ENCODE measurements at regions of chrX and their contacts with region 1.

Region 1: DNA sequence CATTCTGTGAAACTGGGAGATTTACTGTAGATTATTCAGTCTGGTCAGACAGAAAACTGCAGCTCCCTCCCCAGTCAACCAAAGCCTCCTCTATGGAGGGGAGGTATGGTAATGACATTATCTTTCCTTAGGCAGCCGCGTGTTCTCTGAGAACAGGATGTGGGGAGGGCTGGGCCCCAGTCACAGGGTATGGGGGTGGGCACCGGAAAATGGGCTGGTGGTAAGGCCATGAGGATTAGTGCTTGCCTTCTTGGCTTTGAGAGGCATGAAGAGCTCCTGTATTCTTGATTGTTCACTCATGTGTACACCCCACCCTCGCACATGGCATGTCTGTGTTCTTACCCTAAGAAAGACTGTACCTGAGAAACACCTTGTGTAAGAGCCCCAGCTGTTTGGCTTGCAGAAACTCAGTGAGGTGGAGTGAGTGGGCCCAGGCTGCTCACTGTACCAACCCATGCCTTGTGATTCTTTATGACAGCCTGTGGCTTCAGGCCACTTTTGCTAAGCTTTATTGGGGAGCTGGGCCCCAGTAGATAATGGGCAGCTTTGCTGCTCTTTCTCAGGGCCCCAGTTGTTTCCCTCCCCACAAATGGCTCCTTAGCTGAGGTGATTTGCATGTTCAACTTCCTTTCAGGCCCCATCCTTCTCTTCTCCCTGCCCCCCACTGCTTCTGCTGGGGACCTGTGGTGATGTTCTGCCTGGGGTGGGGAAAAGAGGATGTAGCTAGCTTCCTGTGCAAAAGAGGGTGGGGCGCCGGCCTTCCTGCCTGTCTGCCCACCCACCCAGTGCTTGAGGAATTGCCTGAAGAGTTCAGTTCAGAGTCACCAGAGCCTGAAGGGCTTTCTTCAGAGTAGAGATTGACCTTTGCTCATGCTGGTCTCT is 30.7 kb downstream of the MSN start:
- DNase-seq: peak; percentile 39 to 86 (median 74)
- ATAC-seq: peak; percentile 80 to 88
- H3K4me3 Mint-ChIP-seq: peak overlapping the region; percentile 70 to 89 (median 82)
- H3K27ac Mint-ChIP-seq: peak overlapping the region; percentile 79 to 99 (median 96)
- H3K4me1 Mint-ChIP-seq: peaks cover 30 to 96% (median 83%) of the 10 kb centered on the region in 4 donors
- H3K27me3 Mint-ChIP-seq: no peaks in the 10 kb centered on the region

Region 2: GRCh38 chrX:65595460-65595876 is 102.7 kb before region 1 on chrX:
- POLR2A ChIA-PET with region 1: interaction called, 30 read pairs
- DNase-seq: peak; percentile 74 to 95 (median 88)
- ATAC-seq: peak; percentile 70 to 83
- H3K4me3 Mint-ChIP-seq: peak overlapping the region; percentile 38 to 82 (median 75)
- H3K27ac Mint-ChIP-seq: peak overlapping the region; percentile 71 to 99 (median 94)
- H3K4me1 Mint-ChIP-seq: peaks cover 24 to 53% (median 41%) of the 10 kb centered on the region in 4 donors
- H3K27me3 Mint-ChIP-seq: no peaks in the 10 kb centered on the region

Region 3: DNA sequence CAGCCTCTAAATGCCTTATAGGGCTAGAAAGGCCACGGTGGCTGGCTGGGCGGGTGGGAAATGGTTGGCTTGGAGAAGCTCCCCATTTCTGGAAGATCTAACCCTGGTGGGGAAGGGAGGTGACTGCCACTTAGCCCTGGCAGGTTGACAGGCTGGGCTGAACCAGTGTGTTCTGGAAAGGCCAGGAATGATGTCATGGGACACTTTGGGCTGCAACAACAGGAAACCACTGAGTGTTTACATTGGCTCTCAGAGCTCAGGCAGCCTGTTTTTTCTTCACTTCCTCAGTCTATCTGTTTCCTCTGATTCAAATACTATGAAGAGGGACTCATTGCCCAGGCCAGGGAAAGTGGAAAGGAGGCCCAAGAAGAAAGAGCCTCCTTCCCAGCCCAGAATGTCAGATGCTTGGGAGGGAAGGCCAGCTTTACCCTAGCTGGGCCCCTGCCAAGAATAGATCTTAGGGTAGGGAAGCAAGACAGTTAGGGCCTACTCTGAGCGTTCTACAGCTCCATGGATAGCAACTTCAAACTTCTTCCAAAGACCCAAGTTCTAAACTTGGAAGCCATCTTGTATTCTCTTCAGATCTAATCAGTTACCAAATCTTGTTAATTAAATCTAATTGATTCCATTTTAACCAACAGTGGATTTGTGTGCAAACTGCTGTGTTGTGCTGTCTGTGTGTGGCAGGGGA is 96.5 kb before region 1 on chrX:
- POLR2A ChIA-PET with region 1: interaction called, 30 read pairs
- DNase-seq: peak; percentile 12 to 72 (median 38)
- ATAC-seq: peak; percentile 74 to 83
- H3K4me3 Mint-ChIP-seq: peak overlapping the region; percentile 12 to 76 (median 66)
- H3K27ac Mint-ChIP-seq: peak overlapping the region; percentile 83 to 97 (median 94)
- H3K4me1 Mint-ChIP-seq: peaks cover 32 to 77% (median 74%) of the 10 kb centered on the region in 4 donors
- H3K27me3 Mint-ChIP-seq: no peaks in the 10 kb centered on the region

Region 4: DNA sequence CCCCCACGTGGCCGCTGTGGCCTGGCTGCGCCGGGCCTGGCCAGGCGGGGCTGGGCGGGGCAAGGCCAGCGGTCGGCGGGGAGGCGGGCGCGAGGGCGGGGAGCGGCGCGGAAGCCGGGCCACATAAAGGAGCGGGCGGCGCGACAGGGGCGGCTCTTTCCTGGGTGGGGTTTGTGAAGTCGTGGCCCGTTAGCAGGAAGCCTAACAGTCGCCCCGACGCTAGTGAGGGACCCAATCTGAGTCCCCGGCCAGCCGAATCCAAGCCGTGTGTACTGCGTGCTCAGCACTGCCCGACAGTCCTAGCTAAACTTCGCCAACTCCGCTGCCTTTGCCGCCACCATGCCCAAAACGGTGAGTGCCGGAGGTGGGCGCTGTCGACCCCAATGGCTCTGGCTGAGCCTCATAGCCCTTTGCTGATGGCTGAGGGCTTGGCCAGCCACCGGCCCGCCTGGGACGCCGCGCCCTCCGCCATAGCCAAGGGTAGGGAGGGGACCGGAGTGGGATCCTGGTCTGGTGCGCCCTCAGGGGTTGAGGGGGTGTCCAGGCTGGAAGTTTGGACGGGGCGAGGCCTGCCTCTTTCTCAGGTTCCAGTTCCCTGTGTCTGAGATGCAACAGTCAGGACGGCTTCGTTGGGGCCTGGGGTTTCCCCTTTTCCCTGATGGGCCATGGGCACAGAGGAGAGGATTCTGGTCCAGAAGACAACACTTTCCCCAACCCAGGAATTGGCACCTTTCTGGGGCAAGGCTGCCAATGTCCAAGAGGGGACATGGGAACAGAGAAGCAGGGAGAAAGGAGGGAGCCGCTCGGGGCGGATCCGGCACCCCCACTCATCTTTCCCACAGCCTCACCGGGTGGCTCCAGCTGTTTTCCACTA is 30.4 kb before region 1 on chrX and contains the start of gene MSN:
- POLR2A ChIA-PET with region 1: interaction called, 16 read pairs
- DNase-seq: peak; percentile 51 to 80 (median 64)
- ATAC-seq: peak; percentile 81 to 84
- H3K4me3 Mint-ChIP-seq: peak within 1 kb of the TSS; percentile 94 to 98 (median 95)
- H3K27ac Mint-ChIP-seq: peak within 1 kb of the TSS; percentile 85 to 96 (median 94)
- H3K4me1 Mint-ChIP-seq: peaks cover 19 to 42% (median 36%) of the 10 kb centered on the region in 4 donors
- H3K27me3 Mint-ChIP-seq: no peaks in the 10 kb centered on the region
- polyA plus RNA-seq, gene MSN: 467 to 552 (median 518) TPM

Region 5: GRCh38 chrX:65723706-65724105 is 25.6 kb after region 1 on chrX:
- POLR2A ChIA-PET with region 1: interaction called, 22 read pairs
- DNase-seq: peak in 4 of 10 donors; percentile 4 to 38 (median 14)
- ATAC-seq: peak; percentile 17 to 69
- H3K4me3 Mint-ChIP-seq: peak overlapping the region in 9 of 10 donors; percentile 24 to 79 (median 58)
- H3K27ac Mint-ChIP-seq: peak overlapping the region; percentile 78 to 96 (median 91)
- H3K4me1 Mint-ChIP-seq: peaks cover 39 to 94% (median 86%) of the 10 kb centered on the region in 4 donors
- H3K27me3 Mint-ChIP-seq: no peaks in the 10 kb centered on the region

Region 6: DNA sequence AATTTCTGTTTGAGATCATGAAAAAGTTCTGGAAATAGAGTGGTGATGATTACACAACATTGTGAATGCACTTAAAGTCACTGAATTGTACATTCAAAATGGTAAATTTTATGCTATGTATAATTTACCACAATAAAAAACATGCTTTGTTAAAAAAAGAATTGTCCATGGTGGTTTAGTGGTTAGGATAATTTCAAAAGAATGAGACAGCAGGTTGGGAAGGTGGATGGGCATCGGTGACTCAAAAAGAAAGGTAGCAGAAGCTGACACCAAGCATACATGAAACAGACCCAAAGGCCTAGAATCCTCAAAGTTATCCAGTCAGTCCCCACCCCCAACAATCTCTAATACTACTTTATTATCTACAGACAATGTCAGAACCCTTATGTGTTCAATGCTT is 60.3 kb after region 1 on chrX:
- POLR2A ChIA-PET with region 1: no interaction called
- DNase-seq: no peak
- ATAC-seq: no peak
- H3K4me3 Mint-ChIP-seq: no peak overlapping the region
- H3K27ac Mint-ChIP-seq: no peak overlapping the region
- H3K4me1 Mint-ChIP-seq: peaks cover 10 to 39% (median 26%) of the 10 kb centered on the region in 4 donors
- H3K27me3 Mint-ChIP-seq: no peaks in the 10 kb centered on the region